K562 (cell line): ENCODE measurements at regions of chr1 and their contacts with region 1.

Region 1: GRCh38 chr1:3796215-3797061 is at the start of gene LRRC47:
- DNase-seq: peak; percentile 95 to 98 (median 97)
- ATAC-seq: peak; percentile 98
- H3K4me3 ChIP-seq: peak within 1 kb of the TSS; percentile 82
- H3K27ac ChIP-seq: peak within 1 kb of the TSS; percentile 61
- H3K4me1 ChIP-seq: peaks cover 25 to 39% of the 10 kb centered on the region in 2 experiments
- H3K27me3 ChIP-seq: no peaks in the 10 kb centered on the region
- CTCF ChIP-seq: peak in 1 of 3 experiments; percentile 18; a peak in 1 of 6 replicates
- EP300 ChIP-seq: peak; percentile 68; the same call in 1 of the 2 replicates
- POLR2A ChIP-seq: peak; percentile 82
- RAD21 ChIP-seq: no peak
- polyA plus RNA-seq, gene LRRC47: 4.6 to 5.3 TPM

Region 2: GRCh38 chr1:3785456-3786157 is 10.8 kb before region 1 on chr1:
- CTCF ChIA-PET with region 1: interaction called, 4 read pairs
- POLR2A ChIA-PET with region 1: interaction called, 41 read pairs
- in situ Hi-C with region 1: no loop called
- intact Hi-C with region 1: loop called (anchors 1 kb)
- DNase-seq: peak; percentile 65 to 74 (median 70)
- ATAC-seq: peak; percentile 91
- H3K4me3 ChIP-seq: no peak overlapping the region
- H3K27ac ChIP-seq: no peak overlapping the region
- H3K4me1 ChIP-seq: peaks cover 0 to 36% of the 10 kb centered on the region in 2 experiments; a peak in 2 of 5 replicates
- H3K27me3 ChIP-seq: no peaks in the 10 kb centered on the region
- CTCF ChIP-seq: peak; percentile 88 to 96 (median 91)
- EP300 ChIP-seq: no peak
- POLR2A ChIP-seq: no peak
- RAD21 ChIP-seq: peak; percentile 64 to 87